ENCODE measurements at regions of chr2 and their contacts with region 1.

Region 1: DNA sequence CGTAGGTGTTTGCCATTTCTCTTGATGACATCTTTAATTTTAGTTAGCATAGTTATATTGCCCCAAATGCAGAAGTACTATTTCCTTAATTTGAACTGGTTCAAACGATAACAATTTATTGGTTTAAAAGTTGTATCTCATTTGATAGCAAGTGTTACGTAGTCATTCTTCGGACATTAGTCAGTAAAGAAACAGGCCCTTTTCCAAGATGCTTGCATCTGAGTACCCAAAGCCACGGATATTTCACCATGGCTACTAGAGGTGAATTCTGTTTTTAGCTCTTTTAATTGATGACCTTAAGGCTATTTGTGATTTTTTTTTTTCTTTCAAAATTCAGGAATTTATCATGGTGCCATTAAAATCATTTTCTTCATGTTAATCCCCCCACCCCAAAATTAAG is 32.1 kb downstream of the GLS start:
- DNase-seq: no peak
- ATAC-seq: no peak
- H3K4me3 ChIP-seq: no peak overlapping the region
- H3K27ac ChIP-seq: no peak overlapping the region
- H3K4me1 ChIP-seq: no peaks in the 10 kb centered on the region
- H3K27me3 ChIP-seq: no peaks in the 10 kb centered on the region
- CTCF ChIP-seq: no peak
- EP300 ChIP-seq: no peak
- POLR2A ChIP-seq: no peak
- RAD21 ChIP-seq: no peak

Region 2: GRCh38 chr2:190791347-190791975 is 121.3 kb before region 1 on chr2:
- CTCF ChIA-PET with region 1: no interaction called
- POLR2A ChIA-PET with region 1: no interaction called
- in situ Hi-C with region 1: no loop called
- intact Hi-C with region 1: no loop called
- DNase-seq: peak in 3 of 4 experiments; percentile 10 to 52 (median 39)
- ATAC-seq: peak; percentile 45; the same call in 1 of the 3 replicates
- H3K4me3 ChIP-seq: no peak overlapping the region
- H3K27ac ChIP-seq: no peak overlapping the region
- H3K4me1 ChIP-seq: peaks cover 0 to 7% of the 10 kb centered on the region in 2 experiments; a peak in 1 of 5 replicates
- H3K27me3 ChIP-seq: no peaks in the 10 kb centered on the region
- CTCF ChIP-seq: no peak
- EP300 ChIP-seq: no peak; the same call in 1 of the 2 replicates
- POLR2A ChIP-seq: no peak
- RAD21 ChIP-seq: no peak

Region 3: GRCh38 chr2:190927301-190927700 is 14.6 kb after region 1 on chr2:
- CTCF ChIA-PET with region 1: no interaction called
- POLR2A ChIA-PET with region 1: no interaction called
- in situ Hi-C with region 1: no loop called
- intact Hi-C with region 1: loop called (anchors 1 kb)
- DNase-seq: no peak
- ATAC-seq: no peak
- H3K4me3 ChIP-seq: no peak overlapping the region
- H3K27ac ChIP-seq: no peak overlapping the region
- H3K4me1 ChIP-seq: no peaks in the 10 kb centered on the region
- H3K27me3 ChIP-seq: no peaks in the 10 kb centered on the region
- CTCF ChIP-seq: no peak
- EP300 ChIP-seq: no peak
- POLR2A ChIP-seq: no peak
- RAD21 ChIP-seq: no peak

Region 4: DNA sequence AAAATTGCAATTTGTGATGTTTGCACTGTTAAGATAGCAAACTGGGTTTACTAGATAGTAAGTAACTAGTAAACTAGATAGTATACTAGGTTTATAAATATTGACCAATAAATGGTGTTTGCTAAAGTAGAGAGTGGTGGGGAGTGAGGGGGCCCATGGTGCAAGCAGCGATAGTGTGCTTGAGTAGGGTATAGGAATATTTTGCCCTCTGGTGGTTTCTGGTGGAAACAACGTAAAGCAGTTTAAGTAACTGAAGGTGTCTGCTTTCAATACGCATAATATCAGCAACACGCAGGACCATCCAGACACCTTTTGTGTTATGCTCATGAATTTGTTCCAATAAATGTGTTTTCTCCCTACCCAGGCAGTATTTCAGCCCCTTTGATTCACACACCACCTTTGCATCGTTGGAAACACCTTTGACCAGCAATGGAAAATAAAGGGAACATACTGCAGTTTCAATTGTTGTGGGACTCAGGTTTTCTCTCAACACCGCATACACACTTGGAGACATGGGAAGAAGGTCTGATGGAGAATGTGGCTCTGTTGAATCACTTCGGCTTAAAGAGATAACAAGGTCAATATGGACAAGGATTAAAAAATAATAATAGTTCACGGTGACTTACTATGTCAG is 117.9 kb after region 1 on chr2:
- CTCF ChIA-PET with region 1: no interaction called
- POLR2A ChIA-PET with region 1: no interaction called
- in situ Hi-C with region 1: no loop called
- intact Hi-C with region 1: no loop called
- DNase-seq: peak; percentile 16 to 65 (median 36)
- ATAC-seq: peak; percentile 95
- H3K4me3 ChIP-seq: no peak overlapping the region
- H3K27ac ChIP-seq: no peak overlapping the region
- H3K4me1 ChIP-seq: peaks cover 0 to 13% of the 10 kb centered on the region in 2 experiments; a peak in 3 of 5 replicates
- H3K27me3 ChIP-seq: no peaks in the 10 kb centered on the region
- CTCF ChIP-seq: peak; percentile 51 to 62 (median 59)
- EP300 ChIP-seq: no peak
- POLR2A ChIP-seq: no peak
- RAD21 ChIP-seq: peak; percentile 50 to 68

Measured in K562 (cell line).